ENCODE measurements at regions of chr11 and their contacts with region 1.

Region 1: DNA sequence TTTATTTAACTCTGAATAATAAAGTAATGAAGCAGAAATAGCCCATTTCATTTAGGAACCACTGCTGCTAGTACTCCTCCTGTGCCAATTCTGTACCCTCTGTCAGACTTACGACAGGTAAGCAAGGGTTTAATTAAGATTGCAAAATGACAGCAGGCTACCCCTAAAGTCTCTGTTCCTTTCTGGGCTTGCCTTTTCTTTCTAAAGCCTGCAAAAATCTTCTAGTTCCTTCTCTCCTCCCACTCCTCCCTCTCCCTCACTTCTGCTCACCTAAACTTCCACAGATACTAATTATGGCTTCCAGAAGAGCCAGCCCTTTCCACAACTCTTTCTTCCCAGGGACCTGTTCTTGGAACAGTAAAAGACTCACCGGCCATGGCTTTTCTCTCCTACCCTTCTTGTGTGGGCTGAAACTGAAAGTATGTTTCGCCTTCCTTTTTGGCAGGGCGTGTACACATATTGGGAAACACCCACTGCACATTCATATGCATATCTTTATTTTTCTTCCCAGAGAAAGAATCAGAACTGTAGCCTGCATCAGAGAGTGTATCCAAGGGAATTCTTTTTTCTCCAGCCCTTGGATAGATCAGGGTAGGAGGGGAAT is at the start of gene CARD16:
- DNase-seq: no peak
- H3K4me3 ChIP-seq: no peak within 1 kb of the TSS
- H3K4me3 Mint-ChIP-seq: no peak within 1 kb of the TSS
- H3K27ac Mint-ChIP-seq: peak within 1 kb of the TSS; percentile 56
- H3K4me1 ChIP-seq: peaks cover 42% of the 10 kb centered on the region
- H3K4me1 Mint-ChIP-seq: peaks cover 66% of the 10 kb centered on the region
- H3K27me3 ChIP-seq: no peaks in the 10 kb centered on the region
- H3K27me3 Mint-ChIP-seq: no peaks in the 10 kb centered on the region
- CTCF ChIP-seq: no peak
- total RNA-seq, gene CARD16: 0.77 and 1.5 TPM in 2 replicates

Region 2: DNA sequence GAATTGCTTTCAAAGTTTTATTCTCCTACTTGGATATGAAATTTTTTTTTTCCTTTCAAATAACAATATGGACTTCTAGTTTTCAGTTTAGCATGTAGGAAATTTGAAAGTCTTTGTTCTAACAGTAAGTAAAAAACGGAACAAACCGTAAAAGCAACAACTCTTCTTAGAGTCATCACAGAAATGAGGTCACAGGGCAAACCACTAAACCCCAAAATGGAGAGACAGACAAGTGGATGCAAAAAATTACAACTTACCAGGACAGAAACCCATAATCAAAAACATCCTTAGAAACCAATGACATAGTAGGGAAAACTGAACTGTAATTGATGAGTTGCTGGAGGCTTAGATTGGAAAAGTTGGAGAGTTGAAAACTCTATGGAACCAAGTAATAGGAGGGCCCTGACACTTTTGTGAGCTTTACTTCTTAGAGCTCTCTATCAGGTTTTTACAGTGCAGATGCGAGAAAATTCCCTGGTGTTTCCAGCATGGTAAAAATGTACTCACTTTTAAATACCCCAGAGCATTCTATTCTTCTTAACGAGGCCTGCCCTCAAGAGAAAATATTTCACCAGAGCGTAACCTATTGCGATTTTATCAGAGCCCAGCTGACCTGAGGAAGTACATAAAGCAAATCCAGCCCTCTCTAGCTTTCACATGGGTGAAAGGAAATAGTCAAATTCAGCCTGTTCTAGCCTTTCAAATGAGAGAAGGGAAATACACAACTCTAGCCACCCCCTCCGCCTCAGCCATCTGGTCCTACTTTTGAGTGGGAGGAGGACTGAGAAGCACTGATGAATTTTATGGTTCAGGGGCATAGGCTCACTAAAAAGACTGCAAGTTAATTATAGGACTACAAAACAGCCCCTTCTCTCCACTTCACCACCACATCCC is 185.9 kb before region 1 on chr11:
- CTCF ChIA-PET with region 1: no interaction called
- POLR2A ChIA-PET with region 1: no interaction called
- intact Hi-C with region 1: no loop called
- DNase-seq: no peak
- H3K4me3 ChIP-seq: no peak overlapping the region
- H3K4me3 Mint-ChIP-seq: no peak overlapping the region
- H3K27ac Mint-ChIP-seq: no peak overlapping the region
- H3K4me1 ChIP-seq: no peaks in the 10 kb centered on the region
- H3K4me1 Mint-ChIP-seq: no peaks in the 10 kb centered on the region
- H3K27me3 ChIP-seq: no peaks in the 10 kb centered on the region
- H3K27me3 Mint-ChIP-seq: peaks cover 6% of the 10 kb centered on the region
- CTCF ChIP-seq: no peak

Region 3: GRCh38 chr11:104956528-104956927 is 88.5 kb before region 1 on chr11:
- CTCF ChIA-PET with region 1: no interaction called
- POLR2A ChIA-PET with region 1: no interaction called
- intact Hi-C with region 1: no loop called
- DNase-seq: peak in 1 of 2 experiments; percentile 64
- H3K4me3 ChIP-seq: no peak overlapping the region
- H3K4me3 Mint-ChIP-seq: no peak overlapping the region
- H3K27ac Mint-ChIP-seq: peak overlapping the region; percentile 60
- H3K4me1 ChIP-seq: peaks cover 18% of the 10 kb centered on the region
- H3K4me1 Mint-ChIP-seq: peaks cover 14% of the 10 kb centered on the region
- H3K27me3 ChIP-seq: no peaks in the 10 kb centered on the region
- H3K27me3 Mint-ChIP-seq: no peaks in the 10 kb centered on the region
- CTCF ChIP-seq: no peak

Region 4: DNA sequence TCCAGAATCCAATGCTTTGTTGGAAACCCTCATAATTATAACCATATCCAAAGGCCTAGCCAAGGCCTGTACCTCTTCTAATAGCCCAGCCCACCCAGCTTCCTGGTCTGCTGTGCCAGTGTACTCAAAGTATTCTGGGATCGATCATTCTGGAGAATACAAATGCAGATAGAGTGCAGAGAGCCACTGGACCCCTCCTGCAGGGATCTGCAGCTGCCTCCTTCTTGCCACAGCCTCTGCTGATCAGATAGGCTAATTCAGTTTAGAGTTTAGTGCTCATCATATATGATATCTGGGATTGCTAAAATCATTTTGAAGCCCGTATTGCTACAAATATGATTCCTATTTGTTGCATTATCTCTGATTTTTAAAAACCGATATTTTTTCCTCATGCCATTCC is 39.6 kb before region 1 on chr11:
- CTCF ChIA-PET with region 1: no interaction called
- POLR2A ChIA-PET with region 1: no interaction called
- intact Hi-C with region 1: loop called (anchors 5 kb)
- DNase-seq: no peak
- H3K4me3 ChIP-seq: no peak overlapping the region
- H3K4me3 Mint-ChIP-seq: no peak overlapping the region
- H3K27ac Mint-ChIP-seq: peak overlapping the region; percentile 33
- H3K4me1 ChIP-seq: peaks cover 33% of the 10 kb centered on the region
- H3K4me1 Mint-ChIP-seq: peaks cover 18% of the 10 kb centered on the region
- H3K27me3 ChIP-seq: no peaks in the 10 kb centered on the region
- H3K27me3 Mint-ChIP-seq: no peaks in the 10 kb centered on the region
- CTCF ChIP-seq: no peak

Region 5: DNA sequence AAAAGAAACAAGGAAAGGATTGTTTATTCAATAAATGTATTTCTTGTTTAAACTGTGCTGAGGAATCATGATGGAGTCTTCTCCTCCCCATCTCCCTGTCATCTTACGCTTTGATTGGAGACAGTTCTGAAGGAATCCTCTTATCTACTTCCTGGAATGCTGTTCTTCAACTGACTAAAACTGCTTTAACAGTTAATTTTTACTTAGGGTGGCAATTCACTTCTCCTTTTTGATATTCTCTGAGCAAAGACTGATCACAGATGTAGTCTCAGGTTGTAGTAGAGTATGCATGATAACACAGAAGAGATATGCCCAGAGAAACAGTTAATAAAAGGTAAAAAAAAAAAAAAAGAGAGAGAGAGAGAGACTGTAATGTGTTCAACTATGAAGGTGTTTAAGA is 20.7 kb before region 1 on chr11:
- CTCF ChIA-PET with region 1: no interaction called
- POLR2A ChIA-PET with region 1: no interaction called
- intact Hi-C with region 1: loop called (anchors 2 kb)
- DNase-seq: peak in 1 of 2 experiments; percentile 24
- H3K4me3 ChIP-seq: no peak overlapping the region
- H3K4me3 Mint-ChIP-seq: peak overlapping the region; percentile 13
- H3K27ac Mint-ChIP-seq: peak overlapping the region; percentile 73
- H3K4me1 ChIP-seq: peaks cover 32% of the 10 kb centered on the region
- H3K4me1 Mint-ChIP-seq: peaks cover 31% of the 10 kb centered on the region
- H3K27me3 ChIP-seq: no peaks in the 10 kb centered on the region
- H3K27me3 Mint-ChIP-seq: no peaks in the 10 kb centered on the region
- CTCF ChIP-seq: no peak